HepG2 (cell line): ENCODE measurements at regions of chr2 and their contacts with region 1.

Region 1: DNA sequence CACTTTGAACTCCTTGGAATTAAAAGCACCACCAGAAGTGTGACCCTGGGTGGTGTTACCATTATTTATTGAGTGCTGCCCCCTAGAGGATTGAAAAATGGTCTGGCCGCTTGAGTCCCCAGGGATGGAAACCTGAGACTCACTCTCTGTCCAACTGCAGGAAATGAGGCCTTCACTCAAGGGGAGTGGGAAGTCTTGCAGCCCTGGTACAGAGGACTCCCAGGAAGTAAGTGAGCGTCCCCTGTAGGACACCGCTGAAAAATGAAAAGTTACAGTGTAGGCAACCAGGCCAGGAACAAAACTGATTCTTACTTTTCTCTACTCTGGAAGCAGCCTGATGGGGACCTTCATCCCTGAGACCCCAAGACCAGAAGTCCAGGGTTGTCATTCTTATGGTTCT is 2.2 kb upstream of the NRP2 start:
- DNase-seq: peak; percentile 76
- ATAC-seq: peak; percentile 78
- H3K4me3 ChIP-seq: no peak overlapping the region
- H3K27ac ChIP-seq: no peak overlapping the region
- H3K4me1 ChIP-seq: peaks cover 12% of the 10 kb centered on the region
- H3K27me3 ChIP-seq: peaks cover 8 to 41% of the 10 kb centered on the region in 2 experiments
- CTCF ChIP-seq: peak; percentile 78
- EP300 ChIP-seq: no peak
- POLR2A ChIP-seq: no peak
- RAD21 ChIP-seq: peak; percentile 28; the same call in 1 of the 2 replicates

Region 2: GRCh38 chr2:204145263-204145751 is 1534.8 kb before region 1 on chr2:
- CTCF ChIA-PET with region 1: no interaction called
- POLR2A ChIA-PET with region 1: no interaction called
- in situ Hi-C with region 1: no loop called
- intact Hi-C with region 1: loop called (anchors 10 kb)
- DNase-seq: peak; percentile 65
- ATAC-seq: peak; percentile 100
- H3K4me3 ChIP-seq: no peak overlapping the region; a peak in 1 of 6 replicates
- H3K27ac ChIP-seq: no peak overlapping the region
- H3K4me1 ChIP-seq: no peaks in the 10 kb centered on the region
- H3K27me3 ChIP-seq: peaks cover 0 to 4% of the 10 kb centered on the region in 2 experiments; a peak in 2 of 5 replicates
- CTCF ChIP-seq: peak; percentile 96
- EP300 ChIP-seq: no peak
- POLR2A ChIP-seq: no peak
- RAD21 ChIP-seq: peak; percentile 80

Region 3: GRCh38 chr2:204260162-204260877 is 1419.7 kb before region 1 on chr2:
- CTCF ChIA-PET with region 1: interaction called, 7 read pairs
- POLR2A ChIA-PET with region 1: no interaction called
- in situ Hi-C with region 1: no loop called
- intact Hi-C with region 1: loop called (anchors 1 kb)
- DNase-seq: peak; percentile 77
- ATAC-seq: peak; percentile 97
- H3K4me3 ChIP-seq: no peak overlapping the region
- H3K27ac ChIP-seq: no peak overlapping the region
- H3K4me1 ChIP-seq: no peaks in the 10 kb centered on the region
- H3K27me3 ChIP-seq: no peaks in the 10 kb centered on the region
- CTCF ChIP-seq: peak; percentile 75
- EP300 ChIP-seq: no peak
- POLR2A ChIP-seq: no peak
- RAD21 ChIP-seq: peak; percentile 62

Region 4: GRCh38 chr2:204325468-204325867 is 1354.6 kb before region 1 on chr2:
- CTCF ChIA-PET with region 1: interaction called, 7 read pairs
- POLR2A ChIA-PET with region 1: no interaction called
- in situ Hi-C with region 1: loop called (anchors 5 kb)
- intact Hi-C with region 1: loop called (anchors 1 kb)
- DNase-seq: peak; percentile 71
- ATAC-seq: peak; percentile 89
- H3K4me3 ChIP-seq: no peak overlapping the region
- H3K27ac ChIP-seq: no peak overlapping the region
- H3K4me1 ChIP-seq: peaks cover 9% of the 10 kb centered on the region; the same call in 1 of the 2 replicates
- H3K27me3 ChIP-seq: no peaks in the 10 kb centered on the region
- CTCF ChIP-seq: peak; percentile 94
- EP300 ChIP-seq: no peak
- POLR2A ChIP-seq: no peak
- RAD21 ChIP-seq: peak; percentile 84

Region 5: GRCh38 chr2:204871231-204871953 is 808.7 kb before region 1 on chr2:
- CTCF ChIA-PET with region 1: no interaction called
- POLR2A ChIA-PET with region 1: no interaction called
- in situ Hi-C with region 1: no loop called
- intact Hi-C with region 1: loop called (anchors 1 kb)
- DNase-seq: peak; percentile 16
- ATAC-seq: no peak
- H3K4me3 ChIP-seq: no peak overlapping the region
- H3K27ac ChIP-seq: no peak overlapping the region
- H3K4me1 ChIP-seq: no peaks in the 10 kb centered on the region
- H3K27me3 ChIP-seq: no peaks in the 10 kb centered on the region
- CTCF ChIP-seq: peak; percentile 46
- EP300 ChIP-seq: no peak
- POLR2A ChIP-seq: no peak
- RAD21 ChIP-seq: no peak

Region 6: DNA sequence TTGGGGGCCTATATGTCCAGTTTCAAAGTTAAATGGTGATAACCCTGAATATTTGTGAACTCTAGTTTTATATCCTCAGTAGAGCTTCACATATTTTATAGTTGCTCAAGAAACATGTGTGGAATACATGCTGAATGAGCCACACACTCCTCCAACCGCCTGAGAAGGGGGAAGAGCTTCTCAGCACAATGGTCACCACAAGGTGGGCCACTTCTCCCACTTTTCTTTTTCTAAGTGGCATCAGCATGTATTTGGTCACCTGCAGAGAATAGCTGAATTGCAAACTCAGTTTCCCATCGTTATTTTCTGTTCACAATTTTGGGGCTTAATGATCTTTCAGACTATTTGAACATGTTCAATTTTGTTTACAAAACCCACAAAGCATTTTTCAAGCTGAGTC is 794.3 kb before region 1 on chr2:
- CTCF ChIA-PET with region 1: no interaction called
- POLR2A ChIA-PET with region 1: no interaction called
- in situ Hi-C with region 1: loop called (anchors 10 kb)
- intact Hi-C with region 1: loop called (anchors 5 kb)
- DNase-seq: peak; percentile 6
- ATAC-seq: no peak
- H3K4me3 ChIP-seq: no peak overlapping the region
- H3K27ac ChIP-seq: no peak overlapping the region
- H3K4me1 ChIP-seq: no peaks in the 10 kb centered on the region
- H3K27me3 ChIP-seq: no peaks in the 10 kb centered on the region
- CTCF ChIP-seq: peak; percentile 50
- EP300 ChIP-seq: no peak
- POLR2A ChIP-seq: no peak
- RAD21 ChIP-seq: no peak

Region 7: GRCh38 chr2:205323929-205324328 is 356.1 kb before region 1 on chr2:
- CTCF ChIA-PET with region 1: no interaction called
- POLR2A ChIA-PET with region 1: no interaction called
- in situ Hi-C with region 1: no loop called
- intact Hi-C with region 1: loop called (anchors 5 kb)
- DNase-seq: no peak
- ATAC-seq: no peak
- H3K4me3 ChIP-seq: no peak overlapping the region
- H3K27ac ChIP-seq: no peak overlapping the region
- H3K4me1 ChIP-seq: no peaks in the 10 kb centered on the region
- H3K27me3 ChIP-seq: no peaks in the 10 kb centered on the region
- CTCF ChIP-seq: no peak; the same call in 1 of the 2 replicates
- EP300 ChIP-seq: no peak
- POLR2A ChIP-seq: no peak
- RAD21 ChIP-seq: no peak

Region 8: GRCh38 chr2:205785507-205786260 is 105.6 kb after region 1 on chr2:
- CTCF ChIA-PET with region 1: no interaction called
- POLR2A ChIA-PET with region 1: no interaction called
- in situ Hi-C with region 1: no loop called
- intact Hi-C with region 1: no loop called
- DNase-seq: no peak
- ATAC-seq: no peak
- H3K4me3 ChIP-seq: no peak overlapping the region
- H3K27ac ChIP-seq: no peak overlapping the region
- H3K4me1 ChIP-seq: peaks cover 46% of the 10 kb centered on the region
- H3K27me3 ChIP-seq: peaks cover 0 to 4% of the 10 kb centered on the region in 2 experiments; a peak in 1 of 5 replicates
- CTCF ChIP-seq: no peak
- EP300 ChIP-seq: no peak
- POLR2A ChIP-seq: no peak
- RAD21 ChIP-seq: no peak